ENCODE measurements at regions of chr17 and their contacts with region 1.

Region 1: GRCh38 chr17:55845385-55845784 is 94.5 kb downstream of the PCTP start:
- DNase-seq: peak in 6 of 9 experiments; percentile 1 to 51 (median 18)
- ATAC-seq: no peak
- H3K4me3 ChIP-seq: no peak overlapping the region
- H3K4me3 Mint-ChIP-seq: no peak overlapping the region
- H3K27ac ChIP-seq: no peak overlapping the region
- H3K27ac Mint-ChIP-seq: no peak overlapping the region
- H3K4me1 ChIP-seq: no peaks in the 10 kb centered on the region
- H3K4me1 Mint-ChIP-seq: no peaks in the 10 kb centered on the region
- H3K27me3 ChIP-seq: peaks cover 6 to 7% of the 10 kb centered on the region in 2 experiments
- H3K27me3 Mint-ChIP-seq: peaks cover 19% of the 10 kb centered on the region
- CTCF ChIP-seq: no peak

Region 2: GRCh38 chr17:55816532-55817396 is 28.6 kb before region 1 on chr17:
- CTCF ChIA-PET with region 1: no interaction called
- POLR2A ChIA-PET with region 1: no interaction called
- intact Hi-C with region 1: no loop called
- DNase-seq: no peak
- ATAC-seq: no peak
- H3K4me3 ChIP-seq: no peak overlapping the region
- H3K4me3 Mint-ChIP-seq: no peak overlapping the region
- H3K27ac ChIP-seq: no peak overlapping the region
- H3K27ac Mint-ChIP-seq: no peak overlapping the region
- H3K4me1 ChIP-seq: no peaks in the 10 kb centered on the region
- H3K4me1 Mint-ChIP-seq: peaks cover 4% of the 10 kb centered on the region
- H3K27me3 ChIP-seq: no peaks in the 10 kb centered on the region
- H3K27me3 Mint-ChIP-seq: peaks cover 11% of the 10 kb centered on the region
- CTCF ChIP-seq: no peak

Region 3: GRCh38 chr17:55859301-55859795 is 14.0 kb after region 1 on chr17:
- CTCF ChIA-PET with region 1: no interaction called
- POLR2A ChIA-PET with region 1: no interaction called
- intact Hi-C with region 1: no loop called
- DNase-seq: no peak
- ATAC-seq: no peak
- H3K4me3 ChIP-seq: no peak overlapping the region
- H3K4me3 Mint-ChIP-seq: no peak overlapping the region
- H3K27ac ChIP-seq: no peak overlapping the region
- H3K27ac Mint-ChIP-seq: no peak overlapping the region
- H3K4me1 ChIP-seq: no peaks in the 10 kb centered on the region
- H3K4me1 Mint-ChIP-seq: no peaks in the 10 kb centered on the region
- H3K27me3 ChIP-seq: no peaks in the 10 kb centered on the region
- H3K27me3 Mint-ChIP-seq: peaks cover 3% of the 10 kb centered on the region
- CTCF ChIP-seq: no peak

Region 4: DNA sequence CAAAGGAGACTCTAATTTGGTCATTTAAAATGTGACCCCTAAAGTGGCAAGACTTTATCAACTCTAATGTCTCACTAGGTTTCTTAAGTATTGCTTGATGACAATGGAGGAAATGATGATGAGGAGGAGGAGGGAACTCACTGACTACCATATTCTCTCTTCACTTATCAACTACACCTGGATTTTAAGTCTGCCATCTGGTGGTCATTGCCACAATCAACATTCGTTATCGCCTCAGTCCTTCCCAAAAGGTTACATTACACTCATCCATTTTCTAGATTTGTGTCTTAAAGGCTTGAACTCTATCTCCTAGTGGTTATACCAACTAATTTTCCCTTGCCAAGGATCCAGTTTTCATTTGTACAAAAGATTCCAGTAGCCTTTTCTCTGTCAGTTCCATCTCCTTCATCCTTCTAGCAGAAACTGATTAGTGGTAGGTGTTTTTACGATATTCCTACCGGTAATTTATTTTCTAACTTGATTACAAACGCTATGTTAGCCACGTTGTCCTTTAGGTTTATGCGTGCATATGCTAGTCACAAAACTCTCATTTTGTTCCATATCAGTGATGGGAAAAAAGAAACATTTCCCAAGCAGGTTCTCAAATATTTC is 633.6 kb after region 1 on chr17:
- CTCF ChIA-PET with region 1: interaction called, 4 read pairs
- POLR2A ChIA-PET with region 1: no interaction called
- intact Hi-C with region 1: loop called in 1 of 2 experiments (anchors 5 kb)
- DNase-seq: peak in 2 of 9 experiments; percentile 7 to 33
- ATAC-seq: no peak
- H3K4me3 ChIP-seq: no peak overlapping the region
- H3K4me3 Mint-ChIP-seq: no peak overlapping the region
- H3K27ac ChIP-seq: no peak overlapping the region
- H3K27ac Mint-ChIP-seq: no peak overlapping the region
- H3K4me1 ChIP-seq: no peaks in the 10 kb centered on the region
- H3K4me1 Mint-ChIP-seq: peaks cover 4% of the 10 kb centered on the region
- H3K27me3 ChIP-seq: no peaks in the 10 kb centered on the region
- H3K27me3 Mint-ChIP-seq: peaks cover 2% of the 10 kb centered on the region
- CTCF ChIP-seq: peak; percentile 55